ENCODE measurements at regions of chr9 and their contacts with region 1.

Region 1: GRCh38 chr9:133532937-133533668 is 1.4 kb upstream of the ADAMTSL2 start:
- DNase-seq: peak; percentile 77
- H3K4me3 ChIP-seq: no peak overlapping the region; a peak in 2 of 4 replicates
- H3K27ac ChIP-seq: peak overlapping the region in 1 of 2 experiments; percentile 100; a peak in 2 of 4 replicates
- H3K4me1 ChIP-seq: peaks cover 0 to 90% of the 10 kb centered on the region in 2 experiments; a peak in 3 of 4 replicates
- H3K27me3 ChIP-seq: no peaks in the 10 kb centered on the region
- CTCF ChIP-seq: peak; percentile 66
- EP300 ChIP-seq: no peak
- RAD21 ChIP-seq: peak; percentile 83

Region 2: DNA sequence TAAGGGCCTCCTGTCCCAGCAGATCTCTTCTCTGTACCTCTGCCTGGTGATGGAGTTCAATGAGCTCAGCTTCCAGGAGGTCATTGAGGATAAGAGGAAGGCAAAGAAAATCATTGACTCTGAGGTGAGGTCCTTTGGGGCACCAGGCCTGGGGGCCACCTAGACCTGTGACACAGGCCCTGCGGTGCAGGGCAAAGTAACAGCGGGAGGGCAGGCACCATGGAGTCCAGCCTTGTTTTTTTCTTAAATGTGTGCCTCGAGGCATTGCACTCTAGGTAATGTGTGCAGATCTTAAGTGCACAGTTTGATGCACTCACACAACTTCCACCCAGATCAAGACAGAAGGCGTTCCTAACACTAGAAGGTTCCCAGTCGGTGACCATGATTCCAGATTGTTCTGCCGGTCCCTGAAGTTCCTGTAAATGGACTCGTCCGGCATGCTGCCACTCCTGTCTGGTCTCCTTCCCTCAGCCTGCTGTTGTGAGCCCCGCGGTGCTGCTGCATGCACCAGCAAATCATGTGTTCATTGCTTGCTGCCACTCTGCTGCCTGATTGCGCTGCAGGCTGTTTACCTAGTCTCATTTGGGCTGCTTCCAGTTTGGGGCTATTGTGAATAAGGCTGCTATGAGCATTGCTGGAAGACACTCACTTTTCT is 145.6 kb before region 1 on chr9:
- CTCF ChIA-PET with region 1: no interaction called
- POLR2A ChIA-PET with region 1: no interaction called
- DNase-seq: no peak
- H3K4me3 ChIP-seq: no peak overlapping the region
- H3K27ac ChIP-seq: no peak overlapping the region
- H3K4me1 ChIP-seq: no peaks in the 10 kb centered on the region
- H3K27me3 ChIP-seq: no peaks in the 10 kb centered on the region
- CTCF ChIP-seq: no peak
- EP300 ChIP-seq: no peak
- RAD21 ChIP-seq: no peak

Region 3: DNA sequence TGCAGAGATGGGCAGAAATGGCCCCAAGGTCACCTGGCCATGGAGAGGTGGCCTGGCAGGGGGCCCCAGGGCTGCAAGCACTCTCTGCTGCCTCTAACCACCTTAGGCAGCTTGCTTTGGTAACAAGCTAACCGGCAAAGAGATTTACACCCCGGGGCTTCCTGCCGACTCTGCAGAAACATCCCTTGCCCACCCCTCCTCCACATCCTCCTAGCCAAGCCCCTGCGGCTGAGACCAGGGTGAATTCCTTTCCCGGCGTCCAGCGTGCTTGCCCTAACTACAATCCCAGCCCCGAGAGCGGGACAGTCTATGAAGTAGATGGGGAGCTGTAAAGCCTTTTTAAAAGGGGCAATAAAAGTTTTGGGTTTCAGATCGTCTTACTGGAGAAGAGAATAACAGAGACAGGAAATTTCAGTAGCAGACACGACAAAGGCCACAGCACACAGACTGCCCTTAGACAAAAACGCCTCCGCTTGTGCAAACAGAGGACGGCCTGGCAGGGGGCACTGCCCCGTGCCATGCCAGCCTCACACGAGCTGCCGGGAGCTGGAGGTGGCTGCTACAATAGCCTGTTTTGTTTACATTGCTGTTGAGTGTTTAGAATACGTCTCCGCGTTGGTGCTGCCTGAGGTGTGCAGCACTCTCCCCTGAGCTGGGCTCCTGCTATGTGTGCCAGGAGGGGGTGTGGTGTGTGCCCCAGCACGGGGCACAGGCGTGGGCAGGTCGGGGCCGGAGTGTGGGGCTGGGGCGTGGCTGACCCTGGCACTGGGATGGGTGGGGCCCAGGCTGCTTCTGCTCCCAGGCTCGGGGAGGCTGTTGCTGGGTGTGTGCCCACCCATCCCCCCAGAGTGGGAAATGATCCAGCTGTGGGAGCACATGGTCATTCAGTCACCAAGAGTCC is 23.7 kb before region 1 on chr9:
- CTCF ChIA-PET with region 1: interaction called, 12 read pairs
- POLR2A ChIA-PET with region 1: interaction called, 37 read pairs
- DNase-seq: peak; percentile 67
- H3K4me3 ChIP-seq: no peak overlapping the region
- H3K27ac ChIP-seq: peak overlapping the region in 1 of 2 experiments; percentile 62; a peak in 2 of 4 replicates
- H3K4me1 ChIP-seq: peaks cover 0 to 63% of the 10 kb centered on the region in 2 experiments; a peak in 2 of 4 replicates
- H3K27me3 ChIP-seq: no peaks in the 10 kb centered on the region
- CTCF ChIP-seq: no peak
- EP300 ChIP-seq: no peak
- RAD21 ChIP-seq: no peak

Region 4: DNA sequence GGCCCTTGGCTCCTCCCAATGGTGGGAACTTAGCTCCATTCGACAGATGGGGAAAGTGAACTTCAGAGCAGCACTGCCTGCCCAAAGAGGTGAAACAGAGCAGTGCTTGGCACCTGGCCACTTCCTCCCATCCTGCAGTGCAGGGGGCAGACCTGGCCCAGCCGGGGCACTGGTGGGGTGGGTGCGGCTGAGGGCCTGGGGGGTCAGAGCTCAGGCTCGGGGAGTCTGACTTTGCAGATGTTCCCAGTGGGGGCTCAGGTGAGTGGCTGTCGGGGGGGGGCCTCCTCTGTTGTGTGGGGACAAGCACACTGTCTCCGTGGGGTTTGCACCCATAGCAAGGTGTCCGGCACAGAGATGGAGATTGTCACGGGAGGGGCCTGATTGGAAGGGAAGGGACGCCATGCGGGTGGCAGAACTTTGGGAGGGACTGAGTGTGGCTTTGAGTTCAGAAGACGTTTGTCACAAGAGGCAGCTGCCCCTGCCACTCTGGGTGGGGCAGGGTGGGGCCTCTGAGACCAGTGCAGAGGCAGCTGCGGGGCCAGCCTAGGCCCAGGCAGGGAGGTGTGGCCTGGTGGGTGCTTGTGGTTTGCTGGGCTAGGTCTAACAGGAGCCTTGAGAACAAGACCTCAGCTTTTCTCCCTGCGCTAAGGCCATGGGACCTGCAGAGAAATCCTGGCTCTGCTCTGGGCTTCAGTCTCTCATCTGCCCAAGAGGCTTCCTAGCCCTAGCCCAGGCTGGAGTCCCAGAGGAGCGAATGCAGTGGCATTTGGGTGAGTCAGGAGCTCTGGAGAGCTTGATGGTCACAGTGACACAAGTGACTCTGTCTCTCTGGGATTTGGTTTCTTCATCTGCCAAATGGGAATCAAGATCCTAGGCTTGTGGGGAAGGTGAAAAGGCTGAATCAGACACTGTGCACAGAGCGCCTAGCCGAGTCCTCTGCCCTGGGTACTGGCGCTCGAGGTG is 10.7 kb before region 1 on chr9:
- CTCF ChIA-PET with region 1: interaction called, 19 read pairs
- POLR2A ChIA-PET with region 1: interaction called, 3 read pairs
- DNase-seq: peak; percentile 48
- H3K4me3 ChIP-seq: no peak overlapping the region
- H3K27ac ChIP-seq: peak overlapping the region in 1 of 2 experiments; percentile 86; a peak in 2 of 4 replicates
- H3K4me1 ChIP-seq: peaks cover 9 to 68% of the 10 kb centered on the region in 2 experiments; a peak in 3 of 4 replicates
- H3K27me3 ChIP-seq: no peaks in the 10 kb centered on the region
- CTCF ChIP-seq: no peak
- EP300 ChIP-seq: no peak
- RAD21 ChIP-seq: no peak

Region 5: DNA sequence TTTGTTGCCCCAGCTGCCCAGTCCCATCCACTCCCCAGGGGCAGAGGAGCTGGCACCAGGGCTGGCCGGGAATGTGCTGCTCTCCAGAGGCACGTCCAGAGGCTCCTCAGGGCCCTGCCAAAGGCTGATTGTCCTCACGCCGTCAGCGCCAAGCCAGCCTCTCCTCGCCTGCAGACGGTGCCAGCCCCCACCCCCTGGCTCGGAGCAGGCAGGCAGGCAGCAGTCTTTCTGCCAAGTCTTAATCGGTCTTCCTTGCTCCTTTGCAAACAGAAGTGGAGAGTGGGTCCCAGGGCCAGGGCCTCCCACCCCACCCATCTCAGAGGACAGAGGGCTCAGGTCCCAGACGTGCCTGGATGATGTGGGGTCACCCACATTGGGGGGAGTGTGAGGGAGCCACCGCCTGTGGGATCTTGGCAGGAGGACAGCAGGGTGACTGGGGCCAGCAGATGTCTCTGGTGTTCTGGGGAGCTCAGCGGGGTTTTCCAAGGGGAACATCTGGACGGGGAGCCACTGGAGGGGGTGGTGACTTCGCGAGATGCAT is 39.8 kb after region 1 on chr9:
- CTCF ChIA-PET with region 1: interaction called, 18 read pairs
- POLR2A ChIA-PET with region 1: interaction called, 20 read pairs
- DNase-seq: peak; percentile 86
- H3K4me3 ChIP-seq: no peak overlapping the region
- H3K27ac ChIP-seq: peak overlapping the region in 1 of 2 experiments; percentile 97; a peak in 2 of 4 replicates
- H3K4me1 ChIP-seq: peaks cover 0 to 81% of the 10 kb centered on the region in 2 experiments; a peak in 2 of 4 replicates
- H3K27me3 ChIP-seq: no peaks in the 10 kb centered on the region
- CTCF ChIP-seq: no peak
- EP300 ChIP-seq: no peak
- RAD21 ChIP-seq: peak; percentile 59

Region 6: DNA sequence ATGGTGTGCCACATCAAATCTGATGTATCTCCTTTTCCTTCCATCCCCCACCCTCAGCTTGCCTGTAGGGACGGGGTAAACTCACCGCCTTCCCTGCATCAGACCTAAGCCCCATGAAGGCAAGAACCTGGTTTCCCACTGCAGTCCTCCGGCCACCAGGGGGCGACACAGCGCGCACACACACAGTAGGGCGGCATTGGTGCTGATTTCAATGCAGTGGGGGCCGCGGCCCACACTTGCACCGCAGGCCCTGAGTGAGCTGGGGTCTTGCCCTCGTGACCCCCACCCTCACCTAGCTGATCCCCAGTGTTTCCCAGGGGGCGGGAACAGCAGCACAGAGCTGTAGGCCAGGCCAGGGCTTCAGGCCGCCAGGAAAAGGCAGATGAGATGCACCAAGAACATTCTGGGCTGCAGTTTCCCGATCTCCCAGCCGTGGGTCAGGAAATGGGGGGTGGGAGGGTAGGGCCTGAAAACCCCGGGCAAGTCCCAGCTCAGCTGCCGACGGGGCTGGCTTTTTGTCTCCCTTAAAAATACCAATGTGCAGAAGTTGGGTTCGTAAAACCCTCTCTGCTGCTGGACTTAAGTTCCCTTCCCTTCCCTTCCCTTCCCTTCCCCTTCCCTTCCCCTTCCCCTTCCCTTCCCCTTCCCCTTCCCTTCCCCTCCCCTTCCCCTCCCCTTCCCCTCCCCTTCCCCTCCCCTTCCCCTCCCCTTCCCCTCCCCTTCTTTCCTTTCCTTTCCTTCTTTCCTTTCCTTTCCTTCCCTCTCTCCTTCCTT is 56.5 kb after region 1 on chr9:
- CTCF ChIA-PET with region 1: interaction called, 51 read pairs
- POLR2A ChIA-PET with region 1: interaction called, 20 read pairs
- DNase-seq: no peak
- H3K4me3 ChIP-seq: no peak overlapping the region
- H3K27ac ChIP-seq: peak overlapping the region in 1 of 2 experiments; percentile 39; a peak in 1 of 4 replicates
- H3K4me1 ChIP-seq: peaks cover 0 to 69% of the 10 kb centered on the region in 2 experiments; a peak in 3 of 4 replicates
- H3K27me3 ChIP-seq: peaks cover 19% of the 10 kb centered on the region
- CTCF ChIP-seq: peak; percentile 49
- EP300 ChIP-seq: no peak
- RAD21 ChIP-seq: no peak

Region 7: GRCh38 chr9:133634081-133634691 is 101.1 kb after region 1 on chr9:
- CTCF ChIA-PET with region 1: interaction called, 26 read pairs
- POLR2A ChIA-PET with region 1: interaction called, 150 read pairs
- DNase-seq: no peak
- H3K4me3 ChIP-seq: no peak overlapping the region
- H3K27ac ChIP-seq: peak overlapping the region in 1 of 2 experiments; percentile 100; a peak in 2 of 4 replicates
- H3K4me1 ChIP-seq: peaks cover 0 to 69% of the 10 kb centered on the region in 2 experiments; a peak in 2 of 4 replicates
- H3K27me3 ChIP-seq: peaks cover 37% of the 10 kb centered on the region
- CTCF ChIP-seq: no peak
- EP300 ChIP-seq: no peak
- RAD21 ChIP-seq: no peak

Region 8: GRCh38 chr9:133715866-133716563 is 182.9 kb after region 1 on chr9:
- CTCF ChIA-PET with region 1: interaction called, 21 read pairs
- POLR2A ChIA-PET with region 1: interaction called, 3 read pairs
- DNase-seq: peak; percentile 85
- H3K4me3 ChIP-seq: no peak overlapping the region
- H3K27ac ChIP-seq: peak overlapping the region; percentile 58 to 89; a peak in 3 of 4 replicates
- H3K4me1 ChIP-seq: peaks cover 21 to 29% of the 10 kb centered on the region in 2 experiments; a peak in 3 of 4 replicates
- H3K27me3 ChIP-seq: no peaks in the 10 kb centered on the region
- CTCF ChIP-seq: peak; percentile 50
- EP300 ChIP-seq: no peak
- RAD21 ChIP-seq: peak; percentile 80